Activated naive CD4-positive, alpha-beta T cell treated with anti-CD3 and anti-CD28 coated beads for 36 hours (primary cell): ENCODE measurements at regions of chr12 and their contacts with region 1.

Region 1: GRCh38 chr12:44847888-44848702 is 28.0 kb downstream of the NELL2 start:
- DNase-seq: peak; percentile 79
- H3K4me3 Mint-ChIP-seq: peak overlapping the region; percentile 55
- H3K27ac Mint-ChIP-seq: peak overlapping the region; percentile 94
- H3K4me1 Mint-ChIP-seq: peaks cover 72% of the 10 kb centered on the region
- H3K27me3 Mint-ChIP-seq: no peaks in the 10 kb centered on the region

Region 2: GRCh38 chr12:43835656-43836474 is 1012.2 kb before region 1 on chr12 and contains the start of gene TMEM117:
- CTCF ChIA-PET with region 1: no interaction called
- intact Hi-C with region 1: loop called (anchors 10 kb)
- DNase-seq: peak; percentile 62
- H3K4me3 Mint-ChIP-seq: peak within 1 kb of the TSS; percentile 72
- H3K27ac Mint-ChIP-seq: peak within 1 kb of the TSS; percentile 66
- H3K4me1 Mint-ChIP-seq: peaks cover 42% of the 10 kb centered on the region
- H3K27me3 Mint-ChIP-seq: no peaks in the 10 kb centered on the region
- total RNA-seq, gene TMEM117: 1.4 to 2.1 TPM

Region 3: DNA sequence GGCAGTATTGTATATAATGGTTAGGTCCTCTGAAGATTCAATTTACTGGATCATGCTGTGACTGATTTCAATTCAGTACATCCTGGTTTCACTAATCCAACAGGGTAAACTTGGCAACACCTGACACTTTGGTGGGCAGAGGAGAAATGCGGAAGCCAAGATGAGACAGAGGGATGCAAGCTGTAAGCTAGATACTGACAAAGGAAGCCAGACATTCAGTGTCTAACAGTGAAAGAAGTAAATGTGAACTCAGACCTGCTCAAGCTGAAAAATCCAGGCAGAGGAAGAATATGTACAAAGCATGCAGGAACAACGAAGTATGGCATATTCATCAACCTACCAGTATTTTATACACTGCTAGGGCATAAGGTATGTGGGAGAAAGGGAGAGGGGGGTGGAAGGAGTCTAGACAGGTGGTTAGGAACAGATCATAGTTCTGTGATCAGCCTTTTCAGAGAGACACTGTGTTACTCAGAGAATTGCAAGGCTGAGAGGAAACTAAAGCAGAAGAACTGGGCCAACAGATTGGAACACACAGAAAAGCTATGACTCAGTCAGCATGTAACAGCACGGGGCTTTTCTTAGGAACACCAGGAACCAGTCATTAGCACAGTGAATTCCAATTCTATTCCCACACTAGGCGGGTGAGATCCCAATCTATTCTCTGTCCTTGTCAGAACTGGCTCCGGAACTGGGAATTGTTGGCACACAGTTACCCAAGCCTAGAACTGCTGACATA is 12.3 kb before region 1 on chr12:
- CTCF ChIA-PET with region 1: interaction called, 3 read pairs
- intact Hi-C with region 1: loop called (anchors 1 kb)
- DNase-seq: peak; percentile 42
- H3K4me3 Mint-ChIP-seq: peak overlapping the region; percentile 45
- H3K27ac Mint-ChIP-seq: peak overlapping the region; percentile 96
- H3K4me1 Mint-ChIP-seq: peaks cover 90% of the 10 kb centered on the region
- H3K27me3 Mint-ChIP-seq: no peaks in the 10 kb centered on the region

Region 4: GRCh38 chr12:44869503-44869902 is 21.4 kb after region 1 on chr12:
- CTCF ChIA-PET with region 1: interaction called, 6 read pairs
- intact Hi-C with region 1: loop called (anchors 1 kb)
- DNase-seq: no peak
- H3K4me3 Mint-ChIP-seq: peak overlapping the region; percentile 11
- H3K27ac Mint-ChIP-seq: peak overlapping the region; percentile 85
- H3K4me1 Mint-ChIP-seq: peaks cover 62% of the 10 kb centered on the region
- H3K27me3 Mint-ChIP-seq: no peaks in the 10 kb centered on the region

Region 5: DNA sequence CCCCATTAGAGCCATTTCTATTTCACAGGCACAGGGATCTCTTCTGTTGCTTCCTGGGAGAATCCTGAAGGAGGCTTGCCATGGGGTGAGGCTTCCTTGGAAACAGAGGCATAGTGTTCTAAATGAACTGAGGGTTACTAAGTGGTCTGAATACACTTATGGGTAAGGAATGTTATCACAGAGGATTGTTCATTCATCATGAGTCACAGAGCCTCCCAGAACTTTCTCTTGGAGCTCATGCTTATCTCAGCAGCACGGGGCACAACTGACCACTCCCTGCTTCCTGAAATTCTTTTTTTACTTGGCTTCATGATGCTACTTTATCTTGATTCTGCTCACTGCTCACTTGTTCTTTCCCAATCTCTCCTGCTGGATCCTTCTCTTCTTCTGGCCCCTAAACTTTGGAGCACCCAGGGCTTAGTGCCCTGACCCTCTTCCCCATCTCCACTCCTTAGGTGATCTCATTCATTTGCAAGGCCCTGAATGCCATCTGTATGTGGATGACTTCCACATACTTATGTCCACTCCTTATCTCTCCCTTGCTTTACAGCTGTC is 425.7 kb after region 1 on chr12:
- CTCF ChIA-PET with region 1: no interaction called
- intact Hi-C with region 1: no loop called
- DNase-seq: no peak
- H3K4me3 Mint-ChIP-seq: no peak overlapping the region
- H3K27ac Mint-ChIP-seq: no peak overlapping the region
- H3K4me1 Mint-ChIP-seq: peaks cover 6% of the 10 kb centered on the region
- H3K27me3 Mint-ChIP-seq: no peaks in the 10 kb centered on the region